ENCODE measurements at regions of chr3 and their contacts with region 1.

Region 1: DNA sequence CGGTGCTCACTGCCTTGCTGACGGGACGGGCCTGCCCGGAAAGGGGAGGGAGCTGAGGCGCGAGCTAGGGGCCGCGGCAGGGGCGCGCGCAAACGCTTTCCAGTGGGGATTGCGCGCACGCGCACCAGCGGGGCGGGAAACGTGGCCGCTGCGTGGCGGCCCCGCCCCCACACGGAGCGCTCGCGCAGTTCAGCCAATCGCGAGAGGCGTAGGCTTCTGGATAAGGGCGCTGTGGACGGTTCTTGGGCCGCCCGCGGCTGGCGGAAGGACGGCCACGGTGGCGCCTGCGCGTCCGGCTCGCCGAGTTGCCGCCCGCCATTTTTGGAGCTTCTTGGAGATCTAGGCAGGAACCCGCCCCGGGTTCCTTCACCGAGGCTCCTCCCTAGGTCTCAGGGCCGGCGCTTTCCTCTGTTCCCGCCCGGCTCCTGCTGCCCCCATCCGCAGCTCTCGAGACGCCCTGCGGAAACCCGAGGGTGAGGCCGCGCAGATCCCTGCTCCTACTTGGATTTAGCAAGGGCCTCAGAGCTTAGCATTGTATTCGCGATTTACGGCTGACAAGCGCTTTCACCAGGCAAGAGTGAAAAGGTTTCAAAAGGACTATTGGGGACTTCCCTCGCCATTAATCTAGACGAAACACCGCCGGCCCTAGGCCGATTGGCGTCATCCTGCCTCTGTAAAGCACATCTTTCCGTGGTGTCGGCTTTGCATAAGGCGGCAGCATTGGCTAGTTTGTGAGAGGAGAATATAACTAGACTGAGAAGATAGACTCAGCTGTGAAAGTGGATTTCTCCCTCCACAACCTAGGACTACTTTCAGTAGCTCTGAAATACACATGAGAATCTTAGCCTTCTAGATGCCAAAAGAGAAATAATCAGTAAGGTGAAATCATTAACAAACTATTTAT is 496 bp upstream of the STAG1 start:
- DNase-seq: peak; percentile 95 to 99 (median 99)
- ATAC-seq: peak; percentile 91
- H3K4me3 ChIP-seq: peak overlapping the region; percentile 87
- H3K4me3 Mint-ChIP-seq: peak overlapping the region; percentile 68 to 99 (median 88)
- H3K27ac ChIP-seq: peak overlapping the region; percentile 95
- H3K27ac Mint-ChIP-seq: peak overlapping the region; percentile 80 to 98 (median 94)
- H3K4me1 ChIP-seq: peaks cover 20 to 27% of the 10 kb centered on the region in 2 donors
- H3K4me1 Mint-ChIP-seq: peaks cover 37 to 50% (median 43%) of the 10 kb centered on the region in 7 donors
- H3K27me3 ChIP-seq: no peaks in the 10 kb centered on the region
- H3K27me3 Mint-ChIP-seq: no peaks in the 10 kb centered on the region

Region 2: GRCh38 chr3:135965506-135966270 is 787.0 kb before region 1 on chr3 and contains the start of gene PPP2R3A:
- CTCF ChIA-PET with region 1: no interaction called
- POLR2A ChIA-PET with region 1: no interaction called
- intact Hi-C with region 1: loop called in 1 of 2 experiments (anchors 5 kb)
- DNase-seq: peak; percentile 41 to 71 (median 59)
- ATAC-seq: peak; percentile 97
- H3K4me3 ChIP-seq: peak within 1 kb of the TSS; percentile 37
- H3K4me3 Mint-ChIP-seq: peak within 1 kb of the TSS; percentile 74 to 85 (median 81)
- H3K27ac ChIP-seq: no peak within 1 kb of the TSS
- H3K27ac Mint-ChIP-seq: peak within 1 kb of the TSS in 6 of 9 donors; percentile 8 to 66 (median 40)
- H3K4me1 ChIP-seq: peaks cover 5 to 7% of the 10 kb centered on the region in 2 donors
- H3K4me1 Mint-ChIP-seq: peaks cover 9 to 19% (median 12%) of the 10 kb centered on the region in 7 donors
- H3K27me3 ChIP-seq: no peaks in the 10 kb centered on the region
- H3K27me3 Mint-ChIP-seq: peaks cover 30 to 49% (median 41%) of the 10 kb centered on the region in 5 donors
- total RNA-seq, gene PPP2R3A: 0.13 to 0.89 (median 0.59) TPM in 4 of 5 experiments, not detected in the other

Region 3: GRCh38 chr3:136305878-136306277 is 446.8 kb before region 1 on chr3:
- CTCF ChIA-PET with region 1: no interaction called
- POLR2A ChIA-PET with region 1: no interaction called
- intact Hi-C with region 1: loop called in 1 of 2 experiments (anchors 1 kb)
- DNase-seq: peak in 1 of 9 donors; percentile 6
- ATAC-seq: no peak
- H3K4me3 ChIP-seq: no peak overlapping the region
- H3K4me3 Mint-ChIP-seq: no peak overlapping the region
- H3K27ac ChIP-seq: no peak overlapping the region
- H3K27ac Mint-ChIP-seq: no peak overlapping the region
- H3K4me1 ChIP-seq: no peaks in the 10 kb centered on the region
- H3K4me1 Mint-ChIP-seq: peaks cover 0 to 4% (median 0%) of the 10 kb centered on the region in 7 donors
- H3K27me3 ChIP-seq: no peaks in the 10 kb centered on the region
- H3K27me3 Mint-ChIP-seq: no peaks in the 10 kb centered on the region

Region 4: DNA sequence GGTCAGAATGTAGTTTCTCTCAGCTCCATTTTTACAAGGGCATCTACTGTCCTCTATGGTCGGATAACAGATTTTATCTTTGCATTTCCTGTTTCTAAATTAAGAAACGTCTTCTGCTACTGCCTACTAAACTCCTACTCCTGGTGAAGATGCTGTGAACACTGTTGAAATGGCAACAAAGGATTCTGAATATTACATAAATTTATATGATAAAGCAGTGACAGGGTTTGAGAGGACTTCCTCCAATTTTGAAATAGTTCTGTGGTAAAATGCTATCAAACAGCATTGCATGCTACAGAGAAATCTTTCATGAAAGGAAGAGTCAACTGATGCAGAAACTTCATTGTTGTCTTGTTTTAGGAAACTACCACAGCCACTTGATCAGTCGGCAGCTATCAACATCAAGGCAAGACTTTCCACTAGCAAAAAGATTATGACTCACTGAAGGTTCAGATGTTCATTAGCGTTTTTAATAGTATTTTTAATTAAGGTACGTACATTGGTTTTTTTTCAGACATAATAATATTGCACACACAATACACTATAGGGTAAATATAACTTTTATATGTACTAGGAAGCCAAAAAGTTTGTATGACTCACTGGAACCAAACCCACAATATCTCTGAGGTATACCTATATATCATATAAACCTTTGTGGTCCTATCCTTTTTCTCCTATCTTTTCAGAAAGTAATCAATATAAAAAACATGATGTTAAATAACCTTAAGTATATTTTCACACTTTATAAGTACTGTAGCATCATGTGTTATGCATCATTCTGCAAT is 156.6 kb before region 1 on chr3:
- CTCF ChIA-PET with region 1: no interaction called
- POLR2A ChIA-PET with region 1: no interaction called
- intact Hi-C with region 1: loop called in 1 of 2 experiments (anchors 5 kb)
- DNase-seq: peak in 2 of 9 donors; percentile 1 to 14
- ATAC-seq: peak; percentile 29
- H3K4me3 ChIP-seq: no peak overlapping the region
- H3K4me3 Mint-ChIP-seq: peak overlapping the region in 2 of 10 donors; percentile 10 to 25
- H3K27ac ChIP-seq: no peak overlapping the region
- H3K27ac Mint-ChIP-seq: peak overlapping the region in 3 of 9 donors; percentile 29 to 60 (median 48)
- H3K4me1 ChIP-seq: peaks cover 7 to 9% of the 10 kb centered on the region in 2 donors
- H3K4me1 Mint-ChIP-seq: peaks cover 10 to 43% (median 38%) of the 10 kb centered on the region in 7 donors
- H3K27me3 ChIP-seq: no peaks in the 10 kb centered on the region
- H3K27me3 Mint-ChIP-seq: no peaks in the 10 kb centered on the region

Region 5: GRCh38 chr3:136772709-136773108 is 20.0 kb after region 1 on chr3:
- CTCF ChIA-PET with region 1: no interaction called
- POLR2A ChIA-PET with region 1: no interaction called
- intact Hi-C with region 1: no loop called
- DNase-seq: no peak
- ATAC-seq: no peak
- H3K4me3 ChIP-seq: no peak overlapping the region
- H3K4me3 Mint-ChIP-seq: no peak overlapping the region
- H3K27ac ChIP-seq: no peak overlapping the region
- H3K27ac Mint-ChIP-seq: no peak overlapping the region
- H3K4me1 ChIP-seq: no peaks in the 10 kb centered on the region
- H3K4me1 Mint-ChIP-seq: no peaks in the 10 kb centered on the region
- H3K27me3 ChIP-seq: no peaks in the 10 kb centered on the region
- H3K27me3 Mint-ChIP-seq: no peaks in the 10 kb centered on the region

Region 6: DNA sequence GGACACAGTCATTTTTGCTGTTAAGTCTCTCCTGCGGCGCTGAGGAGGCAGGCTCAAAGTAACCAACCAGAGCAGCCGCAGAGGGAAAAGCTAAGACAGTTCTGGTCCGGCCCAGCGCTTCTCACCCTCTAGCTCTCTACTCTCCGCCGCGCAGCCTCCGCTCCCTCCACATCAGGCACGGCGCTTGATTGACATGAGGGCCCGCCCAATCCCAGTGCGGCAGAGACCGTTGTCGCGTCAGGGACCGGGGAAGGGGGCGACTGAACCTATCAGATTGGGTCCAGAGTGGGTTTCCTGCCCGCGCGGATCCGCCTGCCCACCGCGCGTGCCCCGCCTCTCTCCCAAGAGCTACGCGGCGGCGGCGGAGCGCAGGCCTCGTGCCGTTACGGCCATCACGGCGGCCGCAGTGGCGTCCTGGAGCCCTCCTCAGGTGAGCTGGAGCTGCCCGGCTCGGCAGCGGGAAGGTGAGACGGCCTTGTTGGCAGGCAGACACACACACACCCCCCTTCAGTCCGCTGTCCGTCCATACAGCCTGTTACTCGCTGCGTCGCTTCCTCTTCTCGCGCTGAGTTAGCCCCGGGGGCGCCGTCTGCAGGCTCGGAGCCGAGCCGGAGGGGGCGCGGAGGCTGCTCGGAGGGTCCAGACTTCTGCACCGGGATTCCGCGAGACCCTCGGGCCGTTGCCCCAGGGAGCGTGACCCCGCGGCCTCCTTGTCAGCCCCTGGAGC is 109.4 kb after region 1 on chr3 and contains the start of gene NCK1:
- CTCF ChIA-PET with region 1: interaction called, 32 read pairs
- POLR2A ChIA-PET with region 1: interaction called, 117 read pairs
- intact Hi-C with region 1: loop called (anchors 1 kb)
- DNase-seq: peak; percentile 89 to 99 (median 98)
- ATAC-seq: peak; percentile 97
- H3K4me3 ChIP-seq: peak within 1 kb of the TSS; percentile 85
- H3K4me3 Mint-ChIP-seq: peak within 1 kb of the TSS; percentile 91 to 99 (median 94)
- H3K27ac ChIP-seq: peak within 1 kb of the TSS; percentile 93
- H3K27ac Mint-ChIP-seq: peak within 1 kb of the TSS; percentile 93 to 99 (median 97)
- H3K4me1 ChIP-seq: peaks cover 20 to 25% of the 10 kb centered on the region in 2 donors
- H3K4me1 Mint-ChIP-seq: peaks cover 32 to 74% (median 64%) of the 10 kb centered on the region in 7 donors
- H3K27me3 ChIP-seq: no peaks in the 10 kb centered on the region
- H3K27me3 Mint-ChIP-seq: no peaks in the 10 kb centered on the region
- total RNA-seq, gene NCK1: 41.1 to 59.6 (median 47.3) TPM

Region 7: GRCh38 chr3:137946345-137946973 is 1193.8 kb after region 1 on chr3:
- CTCF ChIA-PET with region 1: no interaction called
- POLR2A ChIA-PET with region 1: no interaction called
- intact Hi-C with region 1: loop called in 1 of 2 experiments (anchors 10 kb)
- DNase-seq: peak in 8 of 9 donors; percentile 12 to 61 (median 52)
- ATAC-seq: peak; percentile 47
- H3K4me3 ChIP-seq: no peak overlapping the region
- H3K4me3 Mint-ChIP-seq: peak overlapping the region in 1 of 10 donors; percentile 40
- H3K27ac ChIP-seq: no peak overlapping the region
- H3K27ac Mint-ChIP-seq: peak overlapping the region in 1 of 9 donors; percentile 28
- H3K4me1 ChIP-seq: no peaks in the 10 kb centered on the region
- H3K4me1 Mint-ChIP-seq: peaks cover 0 to 7% (median 5%) of the 10 kb centered on the region in 7 donors
- H3K27me3 ChIP-seq: no peaks in the 10 kb centered on the region
- H3K27me3 Mint-ChIP-seq: peaks cover 0 to 5% (median 4%) of the 10 kb centered on the region in 5 donors

Measured in naive thymus-derived CD4-positive, alpha-beta T cell (primary cell).